Activated naive CD4-positive, alpha-beta T cell treated with anti-CD3 and anti-CD28 coated beads for 36 hours (primary cell): ENCODE measurements at regions of chr12 and their contacts with region 1.

Region 1: DNA sequence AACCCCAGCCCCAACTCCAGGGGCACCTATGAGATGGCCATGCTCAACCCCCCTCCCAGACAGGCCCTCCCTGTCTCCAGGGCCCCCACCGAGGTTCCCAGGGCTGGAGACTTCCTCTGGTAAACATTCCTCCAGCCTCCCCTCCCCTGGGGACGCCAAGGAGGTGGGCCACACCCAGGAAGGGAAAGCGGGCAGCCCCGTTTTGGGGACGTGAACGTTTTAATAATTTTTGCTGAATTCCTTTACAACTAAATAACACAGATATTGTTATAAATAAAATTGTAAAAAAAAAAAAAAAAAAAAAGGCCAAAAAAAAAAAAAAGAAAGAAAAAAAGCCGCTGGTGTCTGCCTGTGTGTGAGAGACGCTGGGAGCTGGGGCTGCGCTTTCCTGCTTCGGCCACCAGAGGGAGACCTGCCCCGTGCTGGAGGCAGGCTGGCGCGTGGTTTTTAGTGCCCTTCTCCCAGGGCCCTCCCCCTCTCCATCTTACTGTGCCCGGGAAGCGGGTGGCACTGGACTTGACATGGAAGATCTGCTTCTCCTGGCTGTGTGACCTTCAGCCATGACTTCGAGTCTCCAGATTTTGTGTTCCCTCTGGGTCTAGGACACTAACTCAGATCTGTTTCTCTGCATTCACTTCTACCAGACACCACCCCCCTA is 3.4 kb upstream of the NXPH4 start:
- DNase-seq: peak; percentile 92
- H3K4me3 Mint-ChIP-seq: no peak overlapping the region
- H3K27ac Mint-ChIP-seq: no peak overlapping the region
- H3K4me1 Mint-ChIP-seq: peaks cover 28% of the 10 kb centered on the region
- H3K27me3 Mint-ChIP-seq: peaks cover 39% of the 10 kb centered on the region

Region 2: DNA sequence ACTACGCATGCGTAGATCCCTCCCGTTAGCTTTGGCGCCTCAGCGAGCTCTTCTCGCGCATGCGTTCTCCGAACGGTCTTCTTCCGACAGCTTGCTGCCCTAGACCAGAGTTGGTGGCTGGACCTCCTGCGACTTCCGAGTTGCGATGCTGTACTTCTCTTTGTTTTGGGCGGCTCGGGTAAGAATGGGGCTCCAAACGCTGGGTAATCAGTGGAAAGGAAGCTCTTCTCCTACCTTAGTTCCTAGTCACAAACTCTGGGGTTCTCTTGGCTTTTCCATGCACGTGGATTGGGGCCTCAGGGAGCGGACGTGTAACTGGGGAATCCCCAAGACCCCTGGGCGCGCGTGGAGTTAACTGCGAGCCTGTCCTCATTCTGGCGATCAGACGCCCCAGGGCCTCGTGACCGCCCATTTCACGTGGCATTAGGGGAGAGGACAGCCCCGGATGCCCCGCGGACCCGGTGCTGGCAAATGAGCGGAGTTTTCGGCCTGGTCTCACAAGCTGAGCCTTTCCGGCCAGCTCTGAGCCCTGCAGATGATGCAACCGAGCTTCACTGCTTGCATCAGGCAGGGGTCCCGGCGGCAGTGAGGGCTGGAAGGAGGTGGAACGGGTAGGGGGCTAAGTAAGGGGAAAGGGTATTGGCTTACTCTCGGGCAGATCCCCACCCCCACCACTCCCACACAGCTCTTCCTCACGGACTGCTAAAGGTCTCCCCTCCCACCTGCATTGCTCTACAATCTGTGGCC is 16.6 kb after region 1 on chr12 and contains the start of gene SHMT2:
- CTCF ChIA-PET with region 1: interaction called, 93 read pairs
- intact Hi-C with region 1: loop called (anchors 1 kb)
- DNase-seq: peak; percentile 97
- H3K4me3 Mint-ChIP-seq: peak within 1 kb of the TSS; percentile 95
- H3K27ac Mint-ChIP-seq: peak within 1 kb of the TSS; percentile 94
- H3K4me1 Mint-ChIP-seq: peaks cover 61% of the 10 kb centered on the region
- H3K27me3 Mint-ChIP-seq: peaks cover 21% of the 10 kb centered on the region
- total RNA-seq, gene SHMT2: 542 to 552 TPM

Region 3: GRCh38 chr12:57248934-57249742 is 36.0 kb after region 1 on chr12:
- CTCF ChIA-PET with region 1: interaction called, 333 read pairs
- intact Hi-C with region 1: no loop called
- DNase-seq: no peak
- H3K4me3 Mint-ChIP-seq: peak overlapping the region; percentile 1
- H3K27ac Mint-ChIP-seq: no peak overlapping the region
- H3K4me1 Mint-ChIP-seq: peaks cover 1% of the 10 kb centered on the region
- H3K27me3 Mint-ChIP-seq: peaks cover 3% of the 10 kb centered on the region

Region 4: DNA sequence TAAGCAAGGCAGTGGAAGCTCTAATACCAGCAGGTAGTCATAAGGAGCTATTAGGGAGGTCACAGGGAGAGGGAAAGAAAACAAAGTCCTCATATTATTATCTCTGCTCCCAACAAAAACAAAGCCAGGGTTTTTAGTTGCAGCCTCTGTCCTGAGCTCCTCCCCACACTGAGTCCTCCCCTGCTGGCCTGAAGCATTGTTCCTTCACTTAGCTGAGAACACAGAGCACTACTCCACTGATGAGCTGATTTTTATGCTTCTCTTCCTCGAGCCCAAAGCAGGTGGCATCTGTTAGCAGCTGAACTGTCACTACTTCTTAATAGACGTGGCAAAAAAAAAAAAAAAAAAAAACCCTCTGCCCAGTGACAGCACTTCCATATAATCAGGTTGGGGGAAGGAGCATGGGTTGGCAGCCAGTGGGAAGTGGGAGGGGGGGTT is 48.3 kb after region 1 on chr12:
- CTCF ChIA-PET with region 1: interaction called, 11 read pairs
- intact Hi-C with region 1: no loop called
- DNase-seq: no peak
- H3K4me3 Mint-ChIP-seq: no peak overlapping the region
- H3K27ac Mint-ChIP-seq: no peak overlapping the region
- H3K4me1 Mint-ChIP-seq: no peaks in the 10 kb centered on the region
- H3K27me3 Mint-ChIP-seq: no peaks in the 10 kb centered on the region

Region 5: GRCh38 chr12:57693659-57694458 is 480.7 kb after region 1 on chr12 and contains the start of gene OS9:
- CTCF ChIA-PET with region 1: no interaction called
- intact Hi-C with region 1: no loop called
- DNase-seq: peak; percentile 99
- H3K4me3 Mint-ChIP-seq: no peak within 1 kb of the TSS
- H3K27ac Mint-ChIP-seq: no peak within 1 kb of the TSS
- H3K4me1 Mint-ChIP-seq: peaks cover 3% of the 10 kb centered on the region
- H3K27me3 Mint-ChIP-seq: no peaks in the 10 kb centered on the region
- total RNA-seq, gene OS9: 60.7 to 60.9 TPM

Region 6: DNA sequence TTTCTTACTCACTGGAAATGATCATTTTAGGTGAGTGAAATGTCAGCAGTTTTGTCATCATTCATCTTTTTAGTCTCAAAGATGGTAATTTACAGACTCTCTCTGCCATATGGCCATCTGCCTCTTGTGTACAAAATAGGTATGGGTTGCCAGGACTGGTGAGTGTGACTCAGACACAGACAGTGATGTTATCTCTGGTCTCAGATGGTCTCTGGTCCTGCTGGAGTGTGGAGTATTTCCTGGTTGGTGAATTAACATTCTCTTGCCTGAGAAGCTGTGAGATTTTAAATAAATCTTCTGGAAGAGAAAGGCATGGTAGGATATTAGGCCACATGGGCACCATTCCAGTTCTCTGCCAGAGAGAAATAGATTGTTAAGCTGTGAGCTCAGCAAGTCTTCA is 935.2 kb after region 1 on chr12:
- CTCF ChIA-PET with region 1: no interaction called
- intact Hi-C with region 1: no loop called
- DNase-seq: no peak
- H3K4me3 Mint-ChIP-seq: no peak overlapping the region
- H3K27ac Mint-ChIP-seq: no peak overlapping the region
- H3K4me1 Mint-ChIP-seq: no peaks in the 10 kb centered on the region
- H3K27me3 Mint-ChIP-seq: peaks cover 5% of the 10 kb centered on the region